CD8-positive, alpha-beta T cell (primary cell): ENCODE measurements at regions of chr15 and their contacts with region 1.

Region 1: GRCh38 chr15:84734794-84735479 is 13.5 kb upstream of the ZNF592 start:
- DNase-seq: peak; percentile 21 to 89 (median 76)
- ATAC-seq: peak; percentile 85
- H3K4me3 ChIP-seq: peak overlapping the region; percentile 36 to 44
- H3K4me3 Mint-ChIP-seq: peak overlapping the region; percentile 77
- H3K27ac ChIP-seq: peak overlapping the region; percentile 7 to 62
- H3K27ac Mint-ChIP-seq: peak overlapping the region; percentile 92
- H3K4me1 ChIP-seq: peaks cover 47% of the 10 kb centered on the region
- H3K4me1 Mint-ChIP-seq: peaks cover 46% of the 10 kb centered on the region
- H3K27me3 ChIP-seq: no peaks in the 10 kb centered on the region
- H3K27me3 Mint-ChIP-seq: no peaks in the 10 kb centered on the region
- CTCF ChIP-seq: no peak

Region 2: DNA sequence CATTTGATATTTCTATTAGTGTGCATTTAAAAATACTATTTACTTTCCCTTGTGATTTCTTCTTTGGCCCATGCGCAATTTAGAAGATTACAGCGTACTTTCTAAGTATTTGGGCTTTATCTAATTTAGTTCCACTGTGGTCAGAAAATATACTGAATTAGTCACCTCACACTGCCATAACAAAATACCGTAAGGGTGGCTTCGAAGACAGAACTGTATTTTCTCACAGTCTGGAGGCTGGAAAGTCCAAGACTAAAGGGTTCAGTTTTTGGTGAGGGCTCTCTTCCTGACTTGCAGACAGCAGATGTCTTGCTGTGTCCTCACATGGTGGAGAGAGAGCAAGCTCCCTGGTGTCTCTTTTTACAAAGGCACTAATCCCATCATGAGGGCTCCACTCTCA is 794.8 kb before region 1 on chr15:
- CTCF ChIA-PET with region 1: no interaction called
- POLR2A ChIA-PET with region 1: no interaction called
- intact Hi-C with region 1: no loop called
- DNase-seq: no peak
- ATAC-seq: no peak
- H3K4me3 ChIP-seq: no peak overlapping the region
- H3K4me3 Mint-ChIP-seq: no peak overlapping the region
- H3K27ac ChIP-seq: no peak overlapping the region
- H3K27ac Mint-ChIP-seq: no peak overlapping the region
- H3K4me1 ChIP-seq: no peaks in the 10 kb centered on the region
- H3K4me1 Mint-ChIP-seq: no peaks in the 10 kb centered on the region
- H3K27me3 ChIP-seq: no peaks in the 10 kb centered on the region
- H3K27me3 Mint-ChIP-seq: peaks cover 5% of the 10 kb centered on the region
- CTCF ChIP-seq: no peak

Region 3: DNA sequence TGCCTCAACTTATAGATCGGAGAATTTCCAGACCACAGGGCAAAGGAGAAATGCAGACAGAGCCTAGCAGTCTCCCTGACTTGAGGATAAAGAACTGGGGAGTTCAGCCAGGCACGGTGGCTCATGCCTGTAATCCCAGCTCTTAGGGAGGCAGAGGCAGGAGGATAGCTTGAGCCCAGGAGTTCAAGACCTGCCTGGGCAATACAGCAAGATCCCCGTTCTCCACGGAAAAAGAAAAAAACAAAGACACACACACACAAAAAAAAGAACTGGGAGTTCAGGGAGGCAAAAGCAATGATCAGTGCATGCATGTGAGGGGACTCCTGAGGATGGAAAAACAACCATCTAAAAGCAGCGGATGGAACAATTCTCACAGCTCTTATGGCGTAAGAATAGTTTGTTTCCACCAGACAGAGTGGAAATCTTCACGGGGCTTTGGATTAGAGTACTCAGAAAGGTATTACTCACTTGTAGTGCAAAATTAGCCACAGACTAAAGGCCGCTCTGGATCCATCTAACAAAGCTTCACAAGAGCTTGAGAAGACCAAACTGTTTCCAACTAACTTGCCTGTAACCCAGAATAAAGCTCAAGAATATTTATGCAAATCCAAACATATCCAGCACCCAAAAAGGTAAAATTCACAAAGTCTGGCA is 35.3 kb before region 1 on chr15:
- CTCF ChIA-PET with region 1: no interaction called
- POLR2A ChIA-PET with region 1: no interaction called
- intact Hi-C with region 1: no loop called
- DNase-seq: no peak
- ATAC-seq: no peak
- H3K4me3 ChIP-seq: no peak overlapping the region
- H3K4me3 Mint-ChIP-seq: no peak overlapping the region
- H3K27ac ChIP-seq: no peak overlapping the region
- H3K27ac Mint-ChIP-seq: no peak overlapping the region
- H3K4me1 ChIP-seq: peaks cover 20% of the 10 kb centered on the region
- H3K4me1 Mint-ChIP-seq: peaks cover 70% of the 10 kb centered on the region
- H3K27me3 ChIP-seq: no peaks in the 10 kb centered on the region
- H3K27me3 Mint-ChIP-seq: no peaks in the 10 kb centered on the region
- CTCF ChIP-seq: no peak

Region 4: GRCh38 chr15:84716036-84716799 is 18.7 kb before region 1 on chr15 and contains the start of gene SEC11A:
- CTCF ChIA-PET with region 1: interaction called, 34 read pairs
- POLR2A ChIA-PET with region 1: interaction called, 79 read pairs
- intact Hi-C with region 1: loop called (anchors 1 kb)
- DNase-seq: peak; percentile 84 to 95 (median 90)
- ATAC-seq: peak; percentile 94
- H3K4me3 ChIP-seq: peak within 1 kb of the TSS; percentile 94 to 98
- H3K4me3 Mint-ChIP-seq: peak within 1 kb of the TSS; percentile 96
- H3K27ac ChIP-seq: peak within 1 kb of the TSS; percentile 74 to 86
- H3K27ac Mint-ChIP-seq: peak within 1 kb of the TSS; percentile 97
- H3K4me1 ChIP-seq: peaks cover 37% of the 10 kb centered on the region
- H3K4me1 Mint-ChIP-seq: peaks cover 44% of the 10 kb centered on the region
- H3K27me3 ChIP-seq: no peaks in the 10 kb centered on the region
- H3K27me3 Mint-ChIP-seq: no peaks in the 10 kb centered on the region
- CTCF ChIP-seq: no peak
- total RNA-seq, gene SEC11A: 36.4 to 38.5 TPM

Region 5: GRCh38 chr15:84934941-84935729 is 200.2 kb after region 1 on chr15:
- CTCF ChIA-PET with region 1: no interaction called
- POLR2A ChIA-PET with region 1: no interaction called
- intact Hi-C with region 1: no loop called
- DNase-seq: no peak
- ATAC-seq: no peak
- H3K4me3 ChIP-seq: no peak overlapping the region
- H3K4me3 Mint-ChIP-seq: no peak overlapping the region
- H3K27ac ChIP-seq: no peak overlapping the region
- H3K27ac Mint-ChIP-seq: no peak overlapping the region
- H3K4me1 ChIP-seq: no peaks in the 10 kb centered on the region
- H3K4me1 Mint-ChIP-seq: no peaks in the 10 kb centered on the region
- H3K27me3 ChIP-seq: no peaks in the 10 kb centered on the region
- H3K27me3 Mint-ChIP-seq: peaks cover 8% of the 10 kb centered on the region
- CTCF ChIP-seq: no peak

Region 6: DNA sequence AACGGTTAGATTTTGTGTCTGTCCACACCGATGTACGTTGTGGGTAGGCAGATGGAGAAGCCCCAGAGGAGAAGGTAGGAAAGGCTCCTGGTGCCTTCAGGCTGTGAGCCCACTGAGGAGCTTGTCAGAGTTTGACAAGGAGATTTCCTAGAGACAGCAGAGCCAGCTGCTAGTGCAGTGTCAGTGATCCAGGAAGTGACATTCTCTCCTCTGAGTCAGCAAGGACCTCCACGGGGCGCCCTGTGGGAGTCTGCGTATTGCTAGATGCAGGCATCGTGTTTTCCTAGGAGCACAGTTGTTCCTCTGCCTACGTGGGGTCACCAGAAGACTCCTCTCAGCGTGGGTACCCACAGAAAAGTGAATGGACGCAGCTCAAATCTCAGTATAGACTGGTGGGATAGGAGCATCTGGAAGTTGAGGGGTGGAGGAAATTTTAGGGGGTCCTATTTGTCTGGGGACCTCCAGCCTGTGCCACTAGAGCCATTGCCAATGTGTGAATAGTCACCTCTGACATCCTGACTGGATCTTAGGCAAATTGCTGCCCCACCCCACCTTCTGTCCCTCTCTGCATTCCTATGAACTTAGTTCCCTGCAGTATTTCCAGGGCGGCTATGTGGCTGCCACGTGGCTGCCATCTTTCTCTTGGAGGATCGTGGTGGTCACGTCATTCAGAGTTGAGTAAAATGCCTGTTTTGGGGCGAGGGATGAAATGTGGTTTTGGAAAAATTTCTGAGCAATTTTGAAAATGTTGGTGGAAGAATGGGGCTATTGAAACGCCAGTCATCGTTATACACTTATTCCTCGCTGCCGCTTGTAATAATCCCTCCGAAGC is 1144.6 kb after region 1 on chr15:
- CTCF ChIA-PET with region 1: no interaction called
- POLR2A ChIA-PET with region 1: no interaction called
- intact Hi-C with region 1: no loop called
- DNase-seq: no peak
- ATAC-seq: no peak
- H3K4me3 ChIP-seq: no peak overlapping the region
- H3K4me3 Mint-ChIP-seq: no peak overlapping the region
- H3K27ac ChIP-seq: no peak overlapping the region
- H3K27ac Mint-ChIP-seq: no peak overlapping the region
- H3K4me1 ChIP-seq: no peaks in the 10 kb centered on the region
- H3K4me1 Mint-ChIP-seq: no peaks in the 10 kb centered on the region
- H3K27me3 ChIP-seq: no peaks in the 10 kb centered on the region
- H3K27me3 Mint-ChIP-seq: peaks cover 40% of the 10 kb centered on the region
- CTCF ChIP-seq: no peak